Activated T-helper 1 cell treated with anti-CD3 and anti-CD28 coated beads, Interleukin-12 subunit alpha, Interleukin-12 subunit beta, Interleukin-2, Interleukin-4 antibody, amounts not matched to agents 30 ng/mL and 10 ng/mL and 1 ng/mL, durations not matched to agents 14 hours and 24 hours and 36 hours (primary cell): ENCODE measurements at regions of chr19 and their contacts with region 1.

Region 1: DNA sequence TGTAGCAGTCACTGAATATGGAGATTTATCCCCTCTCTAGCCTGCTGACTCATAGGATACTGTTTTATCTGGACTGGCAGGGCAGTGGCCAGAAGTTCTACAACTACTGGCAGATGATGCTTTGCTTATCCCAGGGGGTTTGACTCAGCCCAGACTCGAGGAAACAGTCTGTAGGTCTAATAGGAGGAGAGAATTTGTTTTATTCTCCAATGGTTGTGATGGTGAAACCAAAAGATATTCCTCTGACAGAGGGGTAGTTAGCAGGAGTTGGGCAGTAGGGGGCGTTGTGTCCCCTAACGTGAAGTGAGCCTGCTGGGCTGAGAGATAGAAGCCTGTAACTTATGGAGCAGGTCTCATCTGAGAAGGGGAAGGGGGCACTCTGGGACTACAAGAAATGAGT is 74.9 kb downstream of the WTIP start:
- DNase-seq: no peak
- H3K4me3 Mint-ChIP-seq: no peak overlapping the region
- H3K27ac Mint-ChIP-seq: no peak overlapping the region
- H3K4me1 Mint-ChIP-seq: no peaks in the 10 kb centered on the region
- H3K27me3 Mint-ChIP-seq: no peaks in the 10 kb centered on the region

Region 2: DNA sequence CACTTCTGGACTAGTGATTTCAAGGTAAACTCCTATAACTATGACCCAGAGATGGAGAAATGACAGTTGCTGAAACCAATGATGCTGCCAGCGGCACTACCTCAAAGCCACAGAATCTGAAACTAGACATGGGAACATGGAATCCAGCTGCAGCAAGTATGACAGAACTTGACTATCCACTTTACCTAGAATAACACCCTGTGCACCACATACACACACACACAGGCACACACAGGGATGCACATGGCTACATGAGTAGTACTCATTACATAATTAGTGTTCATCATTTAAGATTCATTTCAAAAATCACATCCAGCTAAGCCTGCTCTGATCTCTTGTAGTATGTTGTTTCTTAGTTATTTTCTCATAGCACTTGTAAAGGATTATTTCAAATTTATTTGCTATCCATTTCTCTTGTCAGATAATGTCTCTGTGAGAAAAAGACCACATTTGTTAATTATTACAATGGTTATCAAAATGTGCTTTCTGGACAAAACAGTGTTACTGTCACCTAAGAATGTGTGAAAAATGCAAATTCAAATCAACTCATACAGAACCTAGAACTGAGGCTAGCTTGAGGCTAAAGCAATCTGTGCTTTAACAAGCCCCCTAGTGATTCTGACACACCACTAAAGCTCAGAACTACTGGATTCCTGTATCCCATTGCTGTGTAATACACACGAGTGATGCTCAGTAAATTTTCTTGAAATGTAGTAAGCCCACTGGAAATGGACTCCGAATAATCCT is 15.5 kb before region 1 on chr19:
- intact Hi-C with region 1: no loop called
- DNase-seq: no peak
- H3K4me3 Mint-ChIP-seq: no peak overlapping the region
- H3K27ac Mint-ChIP-seq: no peak overlapping the region
- H3K4me1 Mint-ChIP-seq: no peaks in the 10 kb centered on the region
- H3K27me3 Mint-ChIP-seq: peaks cover 6% of the 10 kb centered on the region

Region 3: GRCh38 chr19:34597997-34598856 is 41.7 kb after region 1 on chr19:
- intact Hi-C with region 1: no loop called
- DNase-seq: no peak
- H3K4me3 Mint-ChIP-seq: no peak overlapping the region
- H3K27ac Mint-ChIP-seq: no peak overlapping the region
- H3K4me1 Mint-ChIP-seq: no peaks in the 10 kb centered on the region
- H3K27me3 Mint-ChIP-seq: no peaks in the 10 kb centered on the region

Region 4: DNA sequence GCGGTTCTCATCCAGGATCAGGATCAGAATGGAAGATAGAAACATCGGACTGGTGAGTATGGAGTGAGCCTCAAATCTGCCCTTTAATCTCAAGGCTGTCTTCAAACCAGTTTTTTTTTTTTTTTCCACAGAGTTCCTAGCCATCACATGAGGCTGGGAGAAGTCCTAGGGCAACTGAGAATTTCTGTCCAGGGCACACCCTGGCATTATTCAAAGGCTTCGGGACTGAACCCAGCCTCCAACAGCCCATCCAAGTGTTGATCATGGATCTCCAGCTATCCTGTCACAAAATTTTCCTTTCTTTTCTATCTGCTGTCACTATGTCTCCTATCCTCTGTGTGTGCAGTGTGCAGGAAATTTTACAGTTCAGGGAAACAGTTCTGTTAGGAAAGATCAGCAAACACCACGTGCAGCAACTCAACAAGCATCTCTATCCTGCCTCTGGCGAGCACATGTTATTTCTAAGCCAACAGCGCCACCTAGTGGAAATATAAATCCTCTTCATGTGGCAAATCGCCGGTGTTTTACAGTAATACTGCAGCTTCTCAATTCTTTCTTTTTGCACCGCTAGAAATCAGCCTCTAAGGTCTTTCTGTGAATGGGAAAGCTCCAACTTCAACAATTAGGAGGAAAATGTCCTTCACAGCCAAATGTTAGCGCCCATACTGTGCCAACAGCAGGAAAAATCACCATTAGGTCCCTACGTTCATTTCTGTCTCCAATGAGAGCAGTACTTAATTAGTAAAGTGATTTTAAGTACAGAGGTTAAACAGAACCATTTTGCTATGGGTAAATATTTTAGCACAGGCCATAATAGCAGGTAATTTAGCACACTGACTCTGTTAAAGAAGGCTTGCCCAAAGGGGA is 156.1 kb after region 1 on chr19:
- intact Hi-C with region 1: loop called (anchors 1 kb)
- DNase-seq: peak; percentile 43
- H3K4me3 Mint-ChIP-seq: no peak overlapping the region
- H3K27ac Mint-ChIP-seq: no peak overlapping the region
- H3K4me1 Mint-ChIP-seq: peaks cover 5% of the 10 kb centered on the region
- H3K27me3 Mint-ChIP-seq: peaks cover 4% of the 10 kb centered on the region

Region 5: DNA sequence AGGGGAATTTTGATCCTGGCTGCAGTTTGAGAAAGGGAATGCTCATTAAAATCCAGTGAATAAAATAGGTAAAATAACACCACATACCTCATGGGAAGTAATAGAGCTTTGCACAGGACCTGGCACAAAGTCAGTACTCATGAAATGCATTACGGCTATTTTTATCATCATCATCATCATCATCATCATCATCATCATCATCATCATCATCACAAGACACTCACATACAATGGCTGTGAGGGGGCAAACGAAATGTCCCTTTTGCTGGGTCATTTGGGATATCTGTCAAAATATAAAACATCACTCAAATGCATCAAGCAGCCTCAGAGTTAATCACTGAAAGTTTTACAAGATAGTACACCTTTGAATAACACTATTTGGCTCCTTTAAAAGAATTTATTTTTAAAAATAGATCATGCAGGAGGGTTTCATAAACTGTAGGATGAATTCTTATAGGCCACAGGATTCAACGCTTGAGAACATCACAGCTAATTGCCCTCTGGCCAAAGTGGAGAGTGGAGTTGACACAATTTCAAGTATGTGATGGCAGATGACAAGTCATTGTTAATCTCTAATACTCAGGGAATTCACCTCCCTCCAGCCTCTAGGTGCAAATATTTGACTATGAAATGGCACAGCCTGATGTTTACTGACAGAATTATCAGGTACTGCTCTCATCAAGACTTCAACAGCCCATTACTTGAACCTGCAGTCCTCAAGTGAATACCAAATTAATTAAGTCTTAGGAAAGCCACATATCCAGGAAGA is 230.8 kb after region 1 on chr19:
- intact Hi-C with region 1: no loop called
- DNase-seq: no peak
- H3K4me3 Mint-ChIP-seq: no peak overlapping the region
- H3K27ac Mint-ChIP-seq: no peak overlapping the region
- H3K4me1 Mint-ChIP-seq: no peaks in the 10 kb centered on the region
- H3K27me3 Mint-ChIP-seq: no peaks in the 10 kb centered on the region